Vagina (tissue), 2 donors: ENCODE measurements at regions of chr1 and their contacts with region 1.

Region 1: DNA sequence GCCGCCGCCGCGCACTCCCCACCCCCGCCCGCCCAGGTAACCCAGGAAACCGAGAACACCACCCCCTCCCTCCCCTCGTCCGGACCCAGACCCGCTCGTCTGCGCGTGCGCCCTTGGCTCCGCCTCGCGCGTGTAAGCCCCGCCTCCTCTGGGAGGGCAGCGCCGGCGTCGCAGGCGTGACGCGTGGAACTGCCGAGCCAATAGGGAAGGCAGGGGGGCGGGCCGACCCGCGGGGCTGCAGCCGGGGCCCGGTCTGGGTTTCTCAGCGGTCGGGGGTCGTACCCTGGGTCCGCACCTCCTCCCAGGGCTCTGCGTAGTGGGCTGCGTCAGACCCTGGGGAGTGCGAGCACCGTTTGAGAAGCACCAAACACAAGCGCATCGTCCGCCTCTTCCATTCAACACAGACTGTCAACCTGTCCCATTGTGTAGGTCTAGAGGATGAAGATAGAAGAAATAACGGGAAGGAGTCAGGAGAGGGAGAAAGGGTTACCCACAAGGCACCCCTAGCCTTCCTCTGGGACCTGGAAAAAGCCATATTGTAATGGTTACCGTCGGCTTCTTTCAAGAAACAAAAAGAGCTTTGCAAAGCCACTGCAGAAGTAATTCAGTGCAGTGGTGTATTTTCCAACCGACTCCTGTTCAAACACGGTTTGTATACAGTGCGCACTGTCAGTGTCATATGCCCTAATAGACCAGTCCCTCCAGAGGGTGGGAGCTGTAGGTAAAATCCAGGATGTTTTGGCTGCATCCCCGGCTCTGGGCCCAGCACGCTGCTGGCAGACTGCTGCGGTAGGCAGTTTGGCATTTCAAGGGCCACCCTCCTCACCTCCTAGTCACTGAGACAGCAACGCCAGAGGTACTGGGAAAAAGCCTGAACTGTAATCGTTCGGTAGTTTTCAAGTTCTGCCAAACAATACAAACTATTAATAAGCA is 473 bp upstream of the LYST start:
- DNase-seq: peak in 1 of 2 donors; percentile 98
- H3K4me3 ChIP-seq: peak overlapping the region; percentile 87 to 98
- H3K27ac ChIP-seq: peak overlapping the region; percentile 99
- H3K4me1 ChIP-seq: peaks cover 42% of the 10 kb centered on the region
- H3K27me3 ChIP-seq: no peaks in the 10 kb centered on the region
- CTCF ChIP-seq: no peak
- POLR2A ChIP-seq: peak in 1 of 2 donors; percentile 69

Region 2: GRCh38 chr1:235917267-235917811 is 50.2 kb after region 1 on chr1:
- intact Hi-C with region 1: loop called (anchors 10 kb)
- DNase-seq: peak in 1 of 2 donors; percentile 99
- H3K4me3 ChIP-seq: no peak overlapping the region
- H3K27ac ChIP-seq: peak overlapping the region; percentile 96
- H3K4me1 ChIP-seq: peaks cover 50% of the 10 kb centered on the region
- H3K27me3 ChIP-seq: no peaks in the 10 kb centered on the region
- CTCF ChIP-seq: no peak
- POLR2A ChIP-seq: no peak